PC-9 (cell line): ENCODE measurements at regions of chr12 and their contacts with region 1.

Region 1: GRCh38 chr12:2974560-2974971 is 15.4 kb downstream of the TEAD4 start:
- DNase-seq: no peak
- H3K4me3 ChIP-seq: no peak overlapping the region
- H3K27ac ChIP-seq: no peak overlapping the region
- H3K4me1 ChIP-seq: no peaks in the 10 kb centered on the region
- H3K27me3 ChIP-seq: no peaks in the 10 kb centered on the region
- CTCF ChIP-seq: no peak

Region 2: GRCh38 chr12:1013618-1014489 is 1960.7 kb before region 1 on chr12:
- CTCF ChIA-PET with region 1: interaction called, 11 read pairs
- POLR2A ChIA-PET with region 1: no interaction called
- intact Hi-C with region 1: no loop called
- DNase-seq: peak; percentile 41 to 54
- H3K4me3 ChIP-seq: no peak overlapping the region
- H3K27ac ChIP-seq: peak overlapping the region; percentile 35; the same call in 1 of the 2 replicates
- H3K4me1 ChIP-seq: 0 out of 2 replicates have a peak, but pooled peaks cover 5% of the 10 kb centered on the region
- H3K27me3 ChIP-seq: no peaks in the 10 kb centered on the region
- CTCF ChIP-seq: no peak

Region 3: DNA sequence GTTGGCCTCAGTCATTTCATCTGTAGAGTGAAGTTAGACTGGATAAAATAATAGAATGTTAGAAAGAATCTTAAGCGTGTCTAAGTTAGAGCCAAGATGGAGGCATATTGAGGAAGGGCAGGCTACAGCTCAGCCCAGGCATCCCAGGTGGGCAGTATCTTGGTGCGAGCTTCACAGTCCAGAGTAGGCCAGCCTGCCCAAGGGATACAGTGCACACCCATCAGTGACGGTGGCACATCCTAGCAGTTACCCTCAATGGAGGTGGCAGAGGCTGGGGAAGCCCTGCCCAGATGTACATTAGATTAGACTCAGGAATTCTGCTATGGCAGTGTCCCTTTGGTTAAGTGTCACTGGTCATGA is 62.4 kb before region 1 on chr12:
- CTCF ChIA-PET with region 1: no interaction called
- POLR2A ChIA-PET with region 1: no interaction called
- intact Hi-C with region 1: no loop called
- DNase-seq: no peak
- H3K4me3 ChIP-seq: no peak overlapping the region
- H3K27ac ChIP-seq: no peak overlapping the region
- H3K4me1 ChIP-seq: 0 out of 2 replicates have a peak, but pooled peaks cover 4% of the 10 kb centered on the region
- H3K27me3 ChIP-seq: no peaks in the 10 kb centered on the region
- CTCF ChIP-seq: no peak